Panc1 (cell line): ENCODE measurements at regions of chr5 and their contacts with region 1.

Region 1: GRCh38 chr5:160082614-160083500 is 36.4 kb downstream of the PWWP2A start:
- DNase-seq: peak; percentile 54
- ATAC-seq: peak; percentile 81
- H3K4me3 ChIP-seq: no peak overlapping the region
- H3K27ac ChIP-seq: peak overlapping the region; percentile 82
- H3K4me1 ChIP-seq: peaks cover 25% of the 10 kb centered on the region
- H3K27me3 ChIP-seq: no peaks in the 10 kb centered on the region
- CTCF ChIP-seq: no peak

Region 2: DNA sequence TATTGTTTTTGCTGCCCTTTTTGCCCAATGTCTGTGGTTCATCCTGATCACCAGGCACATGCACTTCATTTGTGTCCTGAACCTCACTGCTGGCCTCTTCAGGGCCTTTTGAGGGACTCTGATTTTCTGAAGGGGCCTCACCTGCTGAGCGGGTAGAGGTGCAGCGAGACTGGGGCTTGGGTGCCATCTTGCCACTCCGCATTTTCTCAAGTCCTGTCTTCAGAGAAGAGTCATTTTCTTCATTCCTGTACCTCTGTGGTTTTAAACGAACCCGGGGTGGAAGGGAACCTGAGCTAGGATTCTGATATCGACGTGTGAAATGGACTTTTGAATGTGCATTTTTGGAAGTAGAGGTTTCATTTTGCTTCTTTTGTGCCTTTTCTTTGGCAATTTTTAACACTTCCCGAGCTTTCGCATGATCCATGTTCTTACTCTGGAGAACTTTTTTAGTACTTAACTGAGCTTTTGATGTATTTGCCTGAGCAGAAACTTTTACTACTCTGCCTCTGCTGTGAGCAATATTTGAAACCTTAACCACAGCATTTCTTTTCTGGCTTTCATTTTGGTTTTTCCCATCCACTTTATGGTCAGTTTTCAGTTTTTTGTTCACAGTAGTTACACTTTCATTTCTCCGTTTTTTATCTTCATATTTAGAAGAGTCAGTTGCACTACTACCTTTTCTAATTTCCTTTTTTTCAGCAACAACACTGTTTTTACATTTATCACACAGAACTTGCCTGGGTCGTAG is 10.3 kb after region 1 on chr5:
- CTCF ChIA-PET with region 1: interaction called, 10 read pairs
- POLR2A ChIA-PET with region 1: no interaction called
- in situ Hi-C with region 1: no loop called
- intact Hi-C with region 1: no loop called
- DNase-seq: no peak
- ATAC-seq: no peak
- H3K4me3 ChIP-seq: no peak overlapping the region
- H3K27ac ChIP-seq: no peak overlapping the region
- H3K4me1 ChIP-seq: no peaks in the 10 kb centered on the region
- H3K27me3 ChIP-seq: no peaks in the 10 kb centered on the region
- CTCF ChIP-seq: no peak

Region 3: DNA sequence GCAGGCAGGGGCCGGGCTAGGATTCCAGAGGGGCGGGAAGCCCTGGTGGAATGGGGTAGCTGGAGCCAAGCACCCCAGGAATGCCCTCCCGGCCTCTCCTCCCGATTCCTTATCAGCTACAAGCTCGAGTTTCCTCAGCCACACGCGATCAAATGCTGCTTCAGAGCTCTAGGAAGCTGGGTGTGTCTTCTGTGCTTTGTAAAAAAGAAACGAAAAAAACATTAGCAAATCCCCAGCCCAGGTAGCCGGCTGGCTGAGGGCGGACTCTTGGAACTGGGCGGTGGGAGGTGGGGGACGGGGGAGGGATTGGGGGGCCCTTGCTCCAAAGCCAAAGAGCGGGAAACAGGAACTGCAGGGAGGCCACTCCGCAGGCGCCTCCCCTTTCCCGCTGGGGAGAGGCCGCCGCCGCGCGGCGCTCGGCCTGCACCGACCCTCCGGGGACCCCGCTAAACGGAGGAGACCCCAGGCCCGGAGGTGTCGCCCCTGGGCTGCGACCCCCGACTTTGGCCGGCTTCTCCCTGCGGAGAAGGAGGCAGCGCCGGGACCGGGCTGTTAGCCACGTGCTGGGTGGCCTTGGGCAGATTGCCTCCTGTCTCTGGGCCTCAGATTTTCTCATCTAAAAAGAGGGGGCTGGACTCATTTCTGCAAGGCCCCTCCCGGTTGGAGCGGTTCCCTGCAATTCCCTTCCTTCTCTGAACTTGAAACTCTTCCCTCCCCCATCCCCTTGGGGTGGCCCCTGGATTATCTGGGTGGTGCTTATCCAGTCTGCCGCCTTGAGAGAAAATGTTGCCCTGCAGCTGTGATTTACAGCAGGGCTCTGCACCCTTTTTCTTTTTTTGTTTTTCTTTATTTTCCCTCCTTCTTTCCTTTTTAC is 105.5 kb after region 1 on chr5:
- CTCF ChIA-PET with region 1: interaction called, 3 read pairs
- POLR2A ChIA-PET with region 1: interaction called, 12 read pairs
- in situ Hi-C with region 1: no loop called
- intact Hi-C with region 1: no loop called
- DNase-seq: no peak
- ATAC-seq: peak; percentile 85
- H3K4me3 ChIP-seq: peak overlapping the region; percentile 38 to 55
- H3K27ac ChIP-seq: peak overlapping the region; percentile 85
- H3K4me1 ChIP-seq: peaks cover 5% of the 10 kb centered on the region
- H3K27me3 ChIP-seq: no peaks in the 10 kb centered on the region
- CTCF ChIP-seq: no peak

Region 4: GRCh38 chr5:160245506-160246086 is 162.7 kb after region 1 on chr5:
- CTCF ChIA-PET with region 1: interaction called, 12 read pairs
- POLR2A ChIA-PET with region 1: interaction called, 3 read pairs
- in situ Hi-C with region 1: no loop called
- intact Hi-C with region 1: no loop called
- DNase-seq: no peak
- ATAC-seq: peak; percentile 31; the same call in 1 of the 2 replicates
- H3K4me3 ChIP-seq: no peak overlapping the region
- H3K27ac ChIP-seq: no peak overlapping the region
- H3K4me1 ChIP-seq: no peaks in the 10 kb centered on the region
- H3K27me3 ChIP-seq: no peaks in the 10 kb centered on the region
- CTCF ChIP-seq: no peak

Region 5: GRCh38 chr5:160342403-160342941 is 259.6 kb after region 1 on chr5:
- CTCF ChIA-PET with region 1: no interaction called
- POLR2A ChIA-PET with region 1: no interaction called
- in situ Hi-C with region 1: no loop called
- intact Hi-C with region 1: loop called (anchors 2 kb)
- DNase-seq: no peak
- ATAC-seq: no peak; the same call in 1 of the 2 replicates
- H3K4me3 ChIP-seq: no peak overlapping the region
- H3K27ac ChIP-seq: no peak overlapping the region; the same call in 1 of the 2 replicates
- H3K4me1 ChIP-seq: peaks cover 4% of the 10 kb centered on the region
- H3K27me3 ChIP-seq: no peaks in the 10 kb centered on the region
- CTCF ChIP-seq: no peak

Region 6: DNA sequence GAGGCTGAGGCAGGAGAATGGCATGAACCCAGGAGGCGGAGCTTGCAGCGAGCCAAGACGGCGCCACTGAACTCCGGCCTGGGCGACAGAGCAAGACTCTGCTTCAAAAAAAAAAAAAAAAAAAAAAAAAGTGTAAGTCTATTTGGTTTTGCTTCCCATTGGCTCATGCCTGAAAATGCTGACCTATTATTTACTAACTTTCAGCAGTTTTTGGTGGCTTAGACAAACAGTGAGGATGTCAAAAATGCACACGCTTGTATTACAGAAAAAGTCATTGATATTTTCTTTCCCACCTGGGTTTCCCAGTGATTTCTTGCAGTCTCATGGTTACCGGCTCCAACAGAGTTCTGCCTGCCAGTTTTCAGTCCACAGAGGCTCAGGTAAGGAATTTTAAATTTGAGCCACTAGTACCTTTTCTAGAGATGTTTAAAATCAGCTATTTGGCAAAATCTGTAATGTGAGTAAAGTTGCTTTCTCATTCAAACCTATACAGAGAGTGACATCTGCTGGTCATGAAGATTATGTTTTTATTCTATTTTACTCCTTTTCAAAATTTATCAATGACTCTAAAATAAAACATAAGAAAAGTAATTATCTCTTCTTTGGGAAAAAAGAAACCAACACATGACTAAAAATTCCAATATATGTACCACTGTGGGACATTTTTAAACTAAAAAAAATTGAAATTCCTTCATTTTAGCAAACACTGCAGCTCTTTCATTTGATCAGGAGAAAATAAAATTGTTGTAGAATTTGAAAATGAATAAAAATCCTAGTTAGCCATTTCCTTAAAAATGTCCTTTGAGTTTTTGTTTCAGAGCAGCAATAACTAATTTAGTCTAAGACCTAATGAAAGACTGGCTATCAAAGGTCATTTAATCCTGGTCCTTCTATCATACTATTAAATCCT is 308.2 kb after region 1 on chr5:
- CTCF ChIA-PET with region 1: interaction called, 15 read pairs
- POLR2A ChIA-PET with region 1: no interaction called
- in situ Hi-C with region 1: no loop called
- intact Hi-C with region 1: loop called (anchors 5 kb)
- DNase-seq: no peak
- ATAC-seq: no peak
- H3K4me3 ChIP-seq: no peak overlapping the region
- H3K27ac ChIP-seq: no peak overlapping the region
- H3K4me1 ChIP-seq: no peaks in the 10 kb centered on the region
- H3K27me3 ChIP-seq: no peaks in the 10 kb centered on the region
- CTCF ChIP-seq: peak; percentile 65; the same call in 1 of the 2 replicates